Posterior vena cava (tissue), 2 donors: ENCODE measurements at regions of chr5 and their contacts with region 1.

Region 1: GRCh38 chr5:38598994-38599611 is 42.7 kb upstream of the LIFR start:
- DNase-seq: no peak

Region 2: GRCh38 chr5:38473008-38473407 is 126.1 kb before region 1 on chr5:
- intact Hi-C with region 1: no loop called
- DNase-seq: peak; percentile 44

Region 3: GRCh38 chr5:38650946-38651345 is 51.8 kb after region 1 on chr5:
- intact Hi-C with region 1: loop called in 1 of 2 experiments (anchors 10 kb)
- DNase-seq: no peak

Region 4: DNA sequence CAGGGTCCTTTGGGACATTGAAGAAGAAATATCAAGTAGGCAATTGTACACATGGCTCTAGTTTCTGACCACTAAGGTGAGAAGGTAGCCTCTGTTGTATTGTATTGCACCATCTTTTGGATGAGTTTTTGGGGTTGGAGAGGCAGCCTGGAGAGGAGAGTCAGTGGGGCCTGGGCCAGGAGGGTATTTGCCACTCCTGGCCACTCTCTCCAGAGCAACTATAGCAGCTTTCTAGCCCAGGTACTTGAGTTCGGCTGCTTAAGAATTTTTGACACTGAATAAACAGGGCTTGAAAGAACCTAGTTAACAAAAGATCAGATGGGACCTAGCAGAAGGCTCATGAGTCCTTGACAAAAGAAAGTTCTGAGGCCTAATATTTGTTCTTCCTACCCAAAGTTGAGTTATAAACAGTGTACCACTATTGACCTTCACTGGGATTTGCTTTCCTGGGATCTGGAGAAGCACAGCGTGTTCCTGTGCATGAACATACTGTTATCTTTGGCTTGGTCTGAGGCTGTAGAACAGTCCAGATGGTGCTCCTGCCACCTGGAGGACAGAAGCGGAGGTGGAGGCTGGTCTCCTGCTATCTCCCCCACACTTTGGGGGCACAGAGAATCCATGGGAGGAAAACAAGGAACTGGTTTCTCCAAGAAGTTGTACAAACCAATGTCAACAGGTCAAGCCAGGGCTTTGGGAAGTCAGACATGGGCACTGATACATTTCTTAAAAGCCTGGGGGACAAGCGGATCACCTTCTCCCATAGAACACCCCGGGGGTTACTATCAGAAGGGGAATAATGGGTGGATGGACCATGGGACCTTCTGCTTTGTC is 67.8 kb after region 1 on chr5:
- intact Hi-C with region 1: no loop called
- DNase-seq: no peak

Region 5: DNA sequence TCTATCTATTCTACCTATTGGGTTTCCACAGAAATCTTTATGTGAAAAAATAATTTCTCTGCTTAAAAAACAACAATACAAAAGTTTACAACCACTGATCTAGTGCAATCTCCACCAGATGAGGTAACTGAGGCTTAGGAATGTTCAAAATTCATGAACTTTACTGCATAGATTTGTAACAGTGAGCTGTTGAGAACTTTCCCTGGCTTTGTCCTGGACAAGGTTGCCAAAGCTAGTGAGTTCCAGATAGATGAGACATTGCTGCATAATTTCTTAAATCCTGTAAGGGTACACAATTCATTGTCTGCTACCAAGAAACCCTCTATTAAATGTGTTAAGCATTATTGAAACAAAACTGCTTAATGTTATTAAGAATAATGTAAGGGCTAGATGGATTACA is 349.4 kb after region 1 on chr5:
- intact Hi-C with region 1: no loop called
- DNase-seq: no peak